ENCODE measurements at regions of chr18 and their contacts with region 1.

Region 1: DNA sequence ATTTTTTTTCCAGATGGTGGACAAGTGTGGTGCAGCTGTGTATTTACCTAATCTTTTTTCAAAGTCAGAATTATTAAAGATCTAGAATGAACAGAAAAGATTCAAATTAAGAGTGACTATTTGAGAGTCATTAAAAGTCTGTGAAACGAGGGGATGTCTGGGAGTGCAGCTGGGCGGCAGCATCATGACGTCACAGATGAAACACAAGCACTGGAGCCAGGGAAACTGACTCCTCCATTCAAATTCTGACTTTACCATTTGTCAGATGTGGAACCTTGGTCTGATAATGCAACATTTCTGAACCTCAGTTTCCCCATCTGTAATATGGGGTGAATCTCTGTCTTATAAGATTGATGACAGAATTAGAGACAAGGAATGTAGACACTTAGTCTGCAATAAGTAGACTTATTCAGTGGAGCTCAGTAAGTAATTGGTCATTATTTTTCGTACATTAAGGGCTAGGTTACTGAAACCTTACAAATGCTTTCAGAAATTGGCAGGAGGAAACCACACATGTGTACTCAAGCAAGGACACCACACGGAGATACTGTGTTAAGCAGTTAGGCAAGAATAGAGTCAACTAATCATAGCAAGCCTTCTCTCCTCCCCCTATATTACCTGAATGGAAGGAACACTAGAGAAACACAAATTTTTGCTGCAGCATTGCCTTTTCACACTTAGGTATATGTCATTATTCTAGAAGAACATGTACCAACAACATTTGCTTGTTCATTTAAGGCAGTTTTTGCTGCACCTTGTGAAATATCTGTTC is 27.8 kb upstream of the CXXC1 start:
- DNase-seq: peak; percentile 56
- CTCF ChIP-seq: no peak

Region 2: GRCh38 chr18:50350699-50351098 is 35.4 kb after region 1 on chr18:
- in situ Hi-C with region 1: loop called (anchors 5 kb)
- DNase-seq: no peak
- CTCF ChIP-seq: no peak

Region 3: DNA sequence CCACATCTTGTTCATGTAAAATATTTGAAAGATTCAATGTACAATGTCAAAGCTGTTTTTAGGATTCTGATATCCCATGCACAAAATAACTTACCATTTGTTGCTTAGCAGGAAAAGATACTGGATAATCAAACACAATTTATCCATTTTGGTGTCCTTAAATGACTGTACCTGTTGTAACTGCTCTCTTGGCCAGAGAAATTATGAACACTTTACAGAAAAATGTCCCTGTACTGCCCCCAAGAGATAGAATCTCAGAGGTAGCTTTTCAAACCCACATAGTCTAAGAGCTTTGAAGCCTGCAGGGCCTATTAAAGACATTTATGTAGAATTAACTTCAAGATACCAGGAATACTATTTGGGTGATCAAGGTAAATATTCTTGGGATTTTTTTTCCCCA is 551.5 kb after region 1 on chr18:
- in situ Hi-C with region 1: no loop called
- DNase-seq: peak; percentile 34
- CTCF ChIP-seq: peak; percentile 50